K562 (cell line): ENCODE measurements at regions of chr12 and their contacts with region 1.

Region 1: DNA sequence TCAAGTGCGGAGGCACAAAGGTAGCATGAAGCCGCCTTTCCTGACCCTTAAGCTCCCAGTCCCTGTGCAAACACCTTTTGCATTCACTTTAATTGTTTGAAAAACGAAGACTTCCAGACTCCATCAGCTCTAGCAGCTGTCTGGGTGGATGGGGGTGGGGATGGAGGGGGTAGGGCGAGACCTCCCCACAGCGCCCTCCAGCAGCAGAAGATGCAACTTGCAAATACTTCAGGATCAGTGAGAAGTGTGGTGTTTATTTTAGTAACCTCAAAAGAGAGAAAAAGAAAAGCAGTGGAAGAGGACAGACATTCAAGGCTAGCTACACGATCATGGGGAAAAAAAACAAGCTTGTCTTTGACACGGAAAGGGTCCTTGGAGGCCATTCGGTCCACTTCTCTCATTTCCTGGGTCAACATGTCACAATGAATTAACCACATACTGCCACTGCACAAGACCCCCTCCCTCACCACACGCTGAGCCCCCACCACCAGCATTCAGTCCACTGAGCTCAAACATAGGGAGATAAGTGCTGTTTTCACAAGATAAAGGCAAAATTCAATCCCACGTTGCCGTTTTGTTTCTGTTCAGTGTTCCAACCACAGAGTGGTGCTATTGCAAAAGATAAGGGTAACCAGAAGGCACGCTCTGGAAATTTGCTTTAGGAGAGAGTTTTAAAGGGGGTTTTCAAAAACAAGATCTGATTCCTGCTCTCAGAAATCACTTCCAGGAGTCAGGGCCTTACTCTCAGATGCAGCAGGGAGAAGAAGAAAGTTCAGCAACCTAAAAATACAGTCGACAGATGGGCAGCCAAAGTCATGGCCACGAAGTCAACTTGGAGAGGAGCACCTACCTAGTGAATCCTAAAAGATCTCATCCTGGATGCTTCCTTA is 3.3 kb upstream of the NTF3 start:
- DNase-seq: peak; percentile 9 to 19 (median 17)
- ATAC-seq: peak; percentile 40; the same call in 1 of the 3 replicates
- H3K4me3 ChIP-seq: no peak overlapping the region
- H3K27ac ChIP-seq: no peak overlapping the region
- H3K4me1 ChIP-seq: no peaks in the 10 kb centered on the region
- H3K27me3 ChIP-seq: peaks cover 2 to 11% of the 10 kb centered on the region in 2 experiments; a peak in 3 of 5 replicates
- CTCF ChIP-seq: peak; percentile 31 to 54 (median 44)
- EP300 ChIP-seq: no peak
- POLR2A ChIP-seq: no peak
- RAD21 ChIP-seq: peak in 1 of 2 experiments; percentile 59; a peak in 3 of 4 replicates

Region 2: GRCh38 chr12:5511644-5512600 is 83.3 kb after region 1 on chr12:
- CTCF ChIA-PET with region 1: no interaction called
- POLR2A ChIA-PET with region 1: no interaction called
- in situ Hi-C with region 1: no loop called
- intact Hi-C with region 1: loop called (anchors 2 kb)
- DNase-seq: peak; percentile 19 to 31 (median 23)
- ATAC-seq: peak; percentile 69
- H3K4me3 ChIP-seq: no peak overlapping the region
- H3K27ac ChIP-seq: no peak overlapping the region
- H3K4me1 ChIP-seq: no peaks in the 10 kb centered on the region; a peak in 1 of 5 replicates
- H3K27me3 ChIP-seq: peaks cover 0 to 5% of the 10 kb centered on the region in 2 experiments; a peak in 1 of 5 replicates
- CTCF ChIP-seq: peak; percentile 52 to 55 (median 52)
- EP300 ChIP-seq: no peak
- POLR2A ChIP-seq: no peak
- RAD21 ChIP-seq: peak in 1 of 2 experiments; percentile 45; a peak in 1 of 4 replicates

Region 3: GRCh38 chr12:5796171-5796958 is 367.8 kb after region 1 on chr12:
- CTCF ChIA-PET with region 1: no interaction called
- POLR2A ChIA-PET with region 1: no interaction called
- in situ Hi-C with region 1: loop called (anchors 5 kb)
- intact Hi-C with region 1: no loop called
- DNase-seq: peak; percentile 37 to 51 (median 46)
- ATAC-seq: peak; percentile 86
- H3K4me3 ChIP-seq: no peak overlapping the region
- H3K27ac ChIP-seq: no peak overlapping the region
- H3K4me1 ChIP-seq: no peaks in the 10 kb centered on the region
- H3K27me3 ChIP-seq: no peaks in the 10 kb centered on the region; a peak in 1 of 5 replicates
- CTCF ChIP-seq: peak; percentile 59 to 76 (median 66)
- EP300 ChIP-seq: no peak
- POLR2A ChIP-seq: no peak
- RAD21 ChIP-seq: peak; percentile 38 to 69